ENCODE measurements at regions of chr2 and their contacts with region 1.

Region 1: DNA sequence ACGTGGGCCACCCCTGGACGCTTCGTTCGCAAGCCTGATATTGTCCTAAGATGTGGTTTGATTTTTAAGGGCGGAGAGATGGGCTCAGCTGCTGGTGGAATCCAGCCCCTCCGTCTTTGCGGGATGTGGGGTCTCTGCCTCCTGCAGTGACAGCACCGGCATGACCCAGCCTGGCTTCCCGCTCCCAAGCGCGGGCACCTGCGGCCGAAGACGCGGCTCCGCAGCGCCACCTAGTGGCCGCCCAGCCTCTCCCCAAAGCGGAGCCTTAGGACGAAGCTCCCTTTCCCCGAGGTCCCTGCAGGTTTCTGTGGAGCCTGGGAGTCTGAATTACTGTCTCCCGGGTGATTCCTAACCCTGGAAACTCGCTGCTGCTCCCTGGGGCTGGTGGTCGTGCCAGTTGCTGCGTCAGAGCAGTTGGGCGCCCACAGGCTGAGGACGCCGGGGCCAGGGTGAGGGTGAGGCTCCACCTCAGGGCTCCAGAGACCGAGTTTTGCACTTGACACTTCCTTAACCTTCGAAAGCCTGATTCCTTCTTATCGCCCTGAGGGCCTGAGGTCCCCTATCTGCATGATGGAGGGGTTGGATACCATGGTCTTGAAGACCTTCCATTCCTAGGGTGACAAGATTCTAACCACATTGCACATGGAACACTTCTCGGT is 137.5 kb downstream of the TPO start:
- DNase-seq: peak; percentile 28 to 80 (median 66)
- ATAC-seq: peak; percentile 70
- H3K4me3 ChIP-seq: peak overlapping the region; percentile 34
- H3K4me3 Mint-ChIP-seq: peak overlapping the region in 6 of 10 donors; percentile 25 to 73 (median 42)
- H3K27ac ChIP-seq: no peak overlapping the region
- H3K27ac Mint-ChIP-seq: no peak overlapping the region
- H3K4me1 ChIP-seq: peaks cover 0 to 2% of the 10 kb centered on the region in 2 donors
- H3K4me1 Mint-ChIP-seq: peaks cover 5 to 20% (median 7%) of the 10 kb centered on the region in 7 donors
- H3K27me3 ChIP-seq: no peaks in the 10 kb centered on the region
- H3K27me3 Mint-ChIP-seq: no peaks in the 10 kb centered on the region

Region 2: GRCh38 chr2:246489-247144 is 1304.2 kb before region 1 on chr2:
- CTCF ChIA-PET with region 1: no interaction called
- POLR2A ChIA-PET with region 1: no interaction called
- intact Hi-C with region 1: loop called in 1 of 2 experiments (anchors 10 kb)
- DNase-seq: peak in 7 of 9 donors; percentile 21 to 57 (median 49)
- ATAC-seq: peak; percentile 57
- H3K4me3 ChIP-seq: no peak overlapping the region
- H3K4me3 Mint-ChIP-seq: no peak overlapping the region
- H3K27ac ChIP-seq: no peak overlapping the region
- H3K27ac Mint-ChIP-seq: peak overlapping the region in 3 of 9 donors; percentile 7 to 34 (median 24)
- H3K4me1 ChIP-seq: no peaks in the 10 kb centered on the region
- H3K4me1 Mint-ChIP-seq: peaks cover 4 to 9% (median 7%) of the 10 kb centered on the region in 7 donors
- H3K27me3 ChIP-seq: no peaks in the 10 kb centered on the region
- H3K27me3 Mint-ChIP-seq: no peaks in the 10 kb centered on the region

Region 3: GRCh38 chr2:636641-637405 is 914.0 kb before region 1 on chr2:
- CTCF ChIA-PET with region 1: no interaction called
- POLR2A ChIA-PET with region 1: no interaction called
- intact Hi-C with region 1: loop called in 1 of 2 experiments (anchors 1 kb)
- DNase-seq: peak; percentile 27 to 66 (median 45)
- ATAC-seq: peak; percentile 72
- H3K4me3 ChIP-seq: peak overlapping the region; percentile 62
- H3K4me3 Mint-ChIP-seq: peak overlapping the region; percentile 78 to 90 (median 84)
- H3K27ac ChIP-seq: peak overlapping the region; percentile 59
- H3K27ac Mint-ChIP-seq: peak overlapping the region in 8 of 9 donors; percentile 2 to 86 (median 74)
- H3K4me1 ChIP-seq: no peaks in the 10 kb centered on the region
- H3K4me1 Mint-ChIP-seq: peaks cover 0 to 5% (median 0%) of the 10 kb centered on the region in 7 donors
- H3K27me3 ChIP-seq: no peaks in the 10 kb centered on the region
- H3K27me3 Mint-ChIP-seq: peaks cover 0 to 7% (median 0%) of the 10 kb centered on the region in 5 donors

Region 4: GRCh38 chr2:854460-854859 is 696.3 kb before region 1 on chr2:
- CTCF ChIA-PET with region 1: interaction called, 5 read pairs
- POLR2A ChIA-PET with region 1: no interaction called
- intact Hi-C with region 1: loop called in 1 of 2 experiments (anchors 1 kb)
- DNase-seq: peak in 5 of 9 donors; percentile 25 to 64 (median 29)
- ATAC-seq: no peak
- H3K4me3 ChIP-seq: no peak overlapping the region
- H3K4me3 Mint-ChIP-seq: peak overlapping the region in 2 of 10 donors; percentile 19 to 53
- H3K27ac ChIP-seq: no peak overlapping the region
- H3K27ac Mint-ChIP-seq: peak overlapping the region in 2 of 9 donors; percentile 14 to 20
- H3K4me1 ChIP-seq: peaks cover 5 to 6% of the 10 kb centered on the region in 2 donors
- H3K4me1 Mint-ChIP-seq: peaks cover 12 to 27% (median 19%) of the 10 kb centered on the region in 7 donors
- H3K27me3 ChIP-seq: no peaks in the 10 kb centered on the region
- H3K27me3 Mint-ChIP-seq: no peaks in the 10 kb centered on the region

Region 5: DNA sequence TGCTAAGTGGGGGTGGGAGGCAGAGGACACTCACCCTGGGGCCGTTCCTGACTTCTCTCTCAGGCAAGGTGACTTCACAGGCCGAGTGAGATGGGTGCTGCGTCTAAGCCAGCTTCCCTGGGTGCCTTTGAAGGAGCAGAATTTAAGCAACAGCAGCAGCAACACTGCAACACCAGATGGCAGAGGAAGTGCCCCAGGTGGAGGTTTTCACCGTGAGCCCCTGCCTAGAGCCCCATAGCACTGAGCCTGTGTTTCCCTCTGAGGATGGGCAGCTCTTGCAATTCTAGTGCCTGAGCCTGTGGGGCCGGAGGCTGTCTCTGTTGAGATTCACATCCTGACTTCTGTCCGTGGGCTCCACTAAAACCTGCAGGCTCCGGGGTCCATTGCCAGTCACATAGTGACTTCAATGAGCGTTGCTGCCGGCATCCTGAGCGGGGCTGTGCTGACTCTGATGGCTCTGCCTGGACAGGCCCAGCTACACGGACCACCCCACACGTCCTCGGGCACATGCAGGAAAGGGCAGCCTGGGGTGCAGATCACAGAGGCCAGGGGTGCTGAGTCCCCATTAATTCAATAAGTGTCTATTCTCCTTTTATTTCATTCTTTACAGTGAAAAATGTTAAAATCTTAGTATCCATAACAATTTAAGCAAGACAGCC is 381.4 kb before region 1 on chr2:
- CTCF ChIA-PET with region 1: no interaction called
- POLR2A ChIA-PET with region 1: no interaction called
- intact Hi-C with region 1: loop called in 1 of 2 experiments (anchors 5 kb)
- DNase-seq: peak in 4 of 9 donors; percentile 22 to 42 (median 24)
- ATAC-seq: no peak
- H3K4me3 ChIP-seq: no peak overlapping the region
- H3K4me3 Mint-ChIP-seq: peak overlapping the region in 3 of 10 donors; percentile 5 to 47 (median 22)
- H3K27ac ChIP-seq: no peak overlapping the region
- H3K27ac Mint-ChIP-seq: peak overlapping the region in 7 of 9 donors; percentile 40 to 85 (median 71)
- H3K4me1 ChIP-seq: peaks cover 0 to 12% of the 10 kb centered on the region in 2 donors
- H3K4me1 Mint-ChIP-seq: peaks cover 3 to 47% (median 36%) of the 10 kb centered on the region in 7 donors
- H3K27me3 ChIP-seq: no peaks in the 10 kb centered on the region
- H3K27me3 Mint-ChIP-seq: peaks cover 0 to 6% (median 0%) of the 10 kb centered on the region in 5 donors